Mammary epithelial cell (primary cell): ENCODE measurements at regions of chr17 and their contacts with region 1.

Region 1: DNA sequence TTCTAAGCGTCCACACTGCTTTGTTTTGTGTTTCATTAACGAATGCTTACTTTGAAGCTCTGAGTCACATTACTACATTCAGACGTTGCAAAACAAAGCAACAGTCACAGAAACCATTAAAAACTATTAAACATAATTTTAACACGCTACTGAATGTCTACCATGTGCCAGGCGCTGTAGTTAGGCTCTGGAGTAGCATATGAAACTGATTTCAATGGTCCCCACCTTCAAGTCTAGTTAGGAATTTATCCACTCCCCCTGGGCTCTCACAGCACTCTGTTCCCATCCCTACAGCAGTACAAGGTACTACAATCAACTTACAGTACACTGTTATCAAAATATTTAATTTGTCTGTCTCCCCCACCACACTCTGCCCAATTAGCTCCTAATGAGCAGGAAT is 631 bp downstream of the UTP6 start:
- DNase-seq: peak; percentile 38
- H3K4me3 ChIP-seq: peak overlapping the region; percentile 66 to 97 (median 83)
- H3K27ac ChIP-seq: peak overlapping the region; percentile 86
- H3K4me1 ChIP-seq: peaks cover 4% of the 10 kb centered on the region
- H3K27me3 ChIP-seq: no peaks in the 10 kb centered on the region
- CTCF ChIP-seq: no peak

Region 2: DNA sequence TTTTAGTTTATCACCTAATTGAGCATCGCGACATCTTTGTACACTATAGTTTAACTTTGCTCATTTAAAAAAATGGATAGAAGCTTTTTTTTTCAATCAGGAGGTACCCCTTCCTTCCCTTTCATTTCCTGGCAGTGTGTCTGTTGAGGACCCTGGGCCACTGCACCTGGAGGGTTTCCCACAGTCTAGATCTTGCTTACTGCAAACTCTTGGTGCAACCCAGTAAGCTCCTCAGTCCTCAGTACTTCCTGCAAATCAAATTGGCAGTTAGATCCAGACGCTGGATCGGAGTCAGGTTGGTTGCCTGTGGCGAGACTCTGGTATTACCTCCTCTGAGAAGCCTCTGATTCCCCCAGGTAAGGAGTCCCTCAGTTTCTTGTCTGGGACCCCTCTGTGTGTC is 347.4 kb before region 1 on chr17:
- CTCF ChIA-PET with region 1: no interaction called
- dilution Hi-C with region 1: no loop called
- in situ Hi-C with region 1: no loop called
- intact Hi-C with region 1: loop called (anchors 1 kb)
- DNase-seq: no peak
- H3K4me3 ChIP-seq: no peak overlapping the region
- H3K27ac ChIP-seq: no peak overlapping the region
- H3K4me1 ChIP-seq: peaks cover 5% of the 10 kb centered on the region
- H3K27me3 ChIP-seq: no peaks in the 10 kb centered on the region
- CTCF ChIP-seq: no peak